ENCODE measurements at regions of chr7 and their contacts with region 1.

Region 1: GRCh38 chr7:70856866-70857630 is 274.9 kb upstream of the GALNT17 start:
- DNase-seq: peak; percentile 31 to 90
- H3K4me3 ChIP-seq: no peak overlapping the region
- CTCF ChIP-seq: no peak
- POLR2A ChIP-seq: no peak

Region 2: DNA sequence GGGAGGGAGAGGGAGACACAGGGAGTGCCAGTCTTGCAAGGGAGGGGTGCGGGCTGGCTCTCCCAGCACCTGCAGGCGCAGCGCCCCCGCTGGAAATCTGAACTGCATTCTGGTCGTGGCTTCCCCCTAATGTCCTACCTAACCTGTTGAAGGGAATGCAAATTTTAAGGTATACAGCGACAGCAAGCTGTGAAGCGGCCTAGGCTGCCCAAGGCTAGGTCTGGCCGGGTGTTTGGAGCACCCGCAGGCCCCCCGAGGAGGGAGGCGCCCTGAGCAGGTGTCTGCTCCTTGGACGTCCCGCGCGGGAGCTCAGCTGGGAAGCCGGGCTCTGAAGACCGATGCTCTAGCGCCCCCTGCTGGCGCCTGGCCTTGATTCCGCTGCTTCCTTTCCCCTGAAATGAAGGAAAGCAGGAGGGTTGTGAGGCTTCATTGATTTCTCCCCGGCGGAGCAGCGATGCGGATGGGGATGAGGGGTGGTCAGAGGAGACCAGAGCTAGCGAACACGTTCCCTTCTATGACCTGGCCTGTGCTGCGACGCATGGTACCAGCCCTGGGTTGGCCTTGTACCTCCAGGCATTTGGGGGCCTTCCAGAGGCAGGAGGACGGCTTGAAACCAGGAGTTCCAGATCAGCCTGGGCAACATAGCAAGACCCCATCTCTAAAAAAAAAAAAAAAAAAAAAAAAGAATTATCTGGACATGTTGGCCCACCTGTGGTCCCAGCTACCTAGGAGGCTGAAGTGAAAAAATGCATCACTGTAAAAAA is 876.2 kb after region 1 on chr7:
- intact Hi-C with region 1: loop called (anchors 5 kb)
- DNase-seq: peak; percentile 52 to 95
- H3K4me3 ChIP-seq: no peak overlapping the region
- CTCF ChIP-seq: peak in 1 of 3 donors; percentile 73
- POLR2A ChIP-seq: no peak

Measured in lower leg skin (tissue), 4 donors.